K562 (cell line): ENCODE measurements at regions of chr12 and their contacts with region 1.

Region 1: GRCh38 chr12:67222302-67222701 is 46.9 kb upstream of the CAND1 start:
- DNase-seq: peak in 2 of 4 experiments; percentile 5 to 8
- ATAC-seq: peak; percentile 54; the same call in 1 of the 3 replicates
- H3K4me3 ChIP-seq: no peak overlapping the region
- H3K27ac ChIP-seq: no peak overlapping the region
- H3K4me1 ChIP-seq: no peaks in the 10 kb centered on the region
- H3K27me3 ChIP-seq: peaks cover 0 to 6% of the 10 kb centered on the region in 2 experiments; a peak in 1 of 5 replicates
- CTCF ChIP-seq: peak; percentile 33 to 38 (median 34); a peak in 3 of 6 replicates
- EP300 ChIP-seq: no peak
- POLR2A ChIP-seq: no peak
- RAD21 ChIP-seq: no peak

Region 2: DNA sequence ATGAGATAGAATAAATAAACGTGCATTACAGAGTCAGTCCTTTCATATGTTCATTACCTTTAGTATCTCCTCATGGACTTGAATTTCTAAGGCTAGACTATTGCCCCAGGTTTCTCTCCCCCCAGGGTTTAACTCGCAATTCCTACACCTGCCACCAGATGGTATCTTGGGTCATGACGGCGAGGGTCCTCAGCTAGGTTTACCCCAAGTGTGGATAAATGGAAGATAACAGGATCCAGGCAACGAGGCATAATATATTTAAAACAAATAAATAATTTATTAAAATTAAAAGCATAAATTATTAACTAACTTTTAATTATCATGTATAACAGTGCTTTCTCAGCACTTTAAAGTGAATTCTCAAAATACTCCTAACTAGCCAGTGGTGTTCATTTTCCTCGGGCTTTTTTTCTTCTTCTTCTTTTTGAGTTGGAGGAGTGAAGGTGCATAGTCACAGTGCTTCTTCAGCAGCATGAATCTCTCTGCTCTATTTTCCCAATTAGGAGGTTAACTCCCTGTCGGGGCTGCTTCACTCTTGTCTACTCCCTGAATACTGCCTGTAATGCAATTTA is 196.7 kb before region 1 on chr12:
- CTCF ChIA-PET with region 1: no interaction called
- POLR2A ChIA-PET with region 1: no interaction called
- in situ Hi-C with region 1: no loop called
- intact Hi-C with region 1: loop called (anchors 10 kb)
- DNase-seq: peak; percentile 48 to 80 (median 75)
- ATAC-seq: peak; percentile 87
- H3K4me3 ChIP-seq: no peak overlapping the region
- H3K27ac ChIP-seq: no peak overlapping the region
- H3K4me1 ChIP-seq: no peaks in the 10 kb centered on the region
- H3K27me3 ChIP-seq: no peaks in the 10 kb centered on the region
- CTCF ChIP-seq: peak; percentile 60 to 69 (median 68)
- EP300 ChIP-seq: no peak
- POLR2A ChIP-seq: no peak
- RAD21 ChIP-seq: peak in 1 of 2 experiments; percentile 44; a peak in 1 of 4 replicates

Region 3: GRCh38 chr12:67241482-67241881 is 19.2 kb after region 1 on chr12:
- CTCF ChIA-PET with region 1: no interaction called
- POLR2A ChIA-PET with region 1: no interaction called
- in situ Hi-C with region 1: no loop called
- intact Hi-C with region 1: no loop called
- DNase-seq: no peak
- ATAC-seq: peak; percentile 54; the same call in 2 of the 3 replicates
- H3K4me3 ChIP-seq: no peak overlapping the region
- H3K27ac ChIP-seq: no peak overlapping the region
- H3K4me1 ChIP-seq: peaks cover 0 to 4% of the 10 kb centered on the region in 2 experiments; a peak in 1 of 5 replicates
- H3K27me3 ChIP-seq: no peaks in the 10 kb centered on the region
- CTCF ChIP-seq: no peak
- EP300 ChIP-seq: no peak
- POLR2A ChIP-seq: no peak
- RAD21 ChIP-seq: no peak

Region 4: GRCh38 chr12:67562513-67563287 is 340.4 kb after region 1 on chr12:
- CTCF ChIA-PET with region 1: no interaction called
- POLR2A ChIA-PET with region 1: no interaction called
- in situ Hi-C with region 1: no loop called
- intact Hi-C with region 1: no loop called
- DNase-seq: no peak
- ATAC-seq: no peak
- H3K4me3 ChIP-seq: no peak overlapping the region
- H3K27ac ChIP-seq: no peak overlapping the region
- H3K4me1 ChIP-seq: no peaks in the 10 kb centered on the region
- H3K27me3 ChIP-seq: 0 out of 5 replicates have a peak, but pooled peaks cover 0 to 4% of the 10 kb centered on the region in 2 experiments
- CTCF ChIP-seq: no peak
- EP300 ChIP-seq: no peak
- POLR2A ChIP-seq: no peak
- RAD21 ChIP-seq: no peak